ENCODE measurements at regions of chr18 and their contacts with region 1.

Region 1: DNA sequence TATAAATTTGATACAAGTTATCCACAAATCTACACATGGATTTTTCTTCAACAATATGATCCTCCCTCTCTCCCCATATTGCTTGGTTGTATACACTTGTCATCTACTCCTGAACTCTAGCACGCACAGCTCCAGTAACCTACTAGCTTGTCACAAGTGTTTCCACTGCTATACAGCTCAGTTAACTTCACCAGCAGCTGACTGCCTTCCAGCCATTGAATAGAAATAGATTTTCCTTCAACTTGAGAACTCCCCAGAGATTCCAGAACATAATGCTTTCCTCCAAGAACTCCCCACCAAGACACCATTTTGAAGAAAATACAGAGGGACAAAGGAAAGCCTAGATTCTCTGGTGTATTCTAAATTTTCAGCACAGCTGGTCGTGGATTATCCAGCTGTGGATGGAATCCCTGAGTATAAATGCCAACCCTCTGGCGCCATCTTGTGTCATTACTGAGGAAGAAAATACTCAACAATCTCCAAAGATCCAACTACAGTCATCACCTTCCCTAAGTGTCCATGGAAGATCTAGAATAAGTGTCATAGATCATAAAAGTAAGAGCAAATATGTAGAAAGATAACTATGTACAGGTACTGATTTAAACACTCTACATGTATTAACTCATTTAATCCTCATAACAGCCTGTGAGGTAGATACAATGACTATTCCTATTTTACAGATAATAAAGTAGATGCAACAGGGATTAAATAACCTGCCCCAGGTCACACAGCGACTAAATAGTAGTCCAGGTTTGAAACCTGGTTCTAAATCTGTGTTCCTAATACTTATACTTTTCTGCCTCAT is 156.7 kb downstream of the ARHGAP28 start:
- DNase-seq: no peak
- H3K4me3 ChIP-seq: no peak overlapping the region
- H3K27ac ChIP-seq: peak overlapping the region in 3 of 4 donors; percentile 40 to 59 (median 52)
- H3K4me1 ChIP-seq: peaks cover 0 to 19% (median 12%) of the 10 kb centered on the region in 4 donors
- H3K27me3 ChIP-seq: no peaks in the 10 kb centered on the region
- CTCF ChIP-seq: peak; percentile 48 to 79 (median 60)
- EP300 ChIP-seq: no peak
- POLR2A ChIP-seq: no peak

Region 2: GRCh38 chr18:5879479-5879882 is 1006.7 kb before region 1 on chr18:
- intact Hi-C with region 1: loop called (anchors 5 kb)
- DNase-seq: no peak
- H3K4me3 ChIP-seq: no peak overlapping the region
- H3K27ac ChIP-seq: no peak overlapping the region
- H3K4me1 ChIP-seq: no peaks in the 10 kb centered on the region
- H3K27me3 ChIP-seq: peaks cover 0 to 13% (median 0%) of the 10 kb centered on the region in 3 donors
- CTCF ChIP-seq: peak in 3 of 4 experiments; percentile 54 to 67 (median 55)
- EP300 ChIP-seq: no peak
- POLR2A ChIP-seq: no peak

Region 3: GRCh38 chr18:6543330-6543908 is 342.8 kb before region 1 on chr18:
- intact Hi-C with region 1: loop called (anchors 1 kb)
- DNase-seq: no peak
- H3K4me3 ChIP-seq: no peak overlapping the region
- H3K27ac ChIP-seq: no peak overlapping the region
- H3K4me1 ChIP-seq: peaks cover 0 to 4% (median 0%) of the 10 kb centered on the region in 4 donors
- H3K27me3 ChIP-seq: no peaks in the 10 kb centered on the region
- CTCF ChIP-seq: peak in 3 of 4 experiments; percentile 45 to 47 (median 46)
- EP300 ChIP-seq: no peak
- POLR2A ChIP-seq: no peak

Region 4: DNA sequence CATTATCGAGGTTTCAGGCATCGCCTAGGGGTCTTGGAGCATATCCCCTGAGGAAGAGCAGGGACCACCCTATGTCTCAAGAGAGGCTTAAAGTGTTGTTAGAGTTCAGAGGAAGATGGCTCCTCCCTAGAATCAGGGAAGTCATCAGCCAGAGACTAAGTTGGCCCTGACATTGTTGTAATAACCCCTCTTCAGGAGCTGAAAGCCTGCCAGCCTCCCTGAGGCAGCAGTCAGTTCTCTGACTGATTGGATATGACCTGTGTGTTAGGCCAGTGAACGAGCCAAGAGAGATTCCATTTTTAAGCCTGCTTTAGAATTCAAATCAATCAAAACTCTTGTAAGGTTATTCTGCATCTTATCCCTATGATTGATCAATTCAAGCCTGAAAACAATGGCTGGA is 121.8 kb before region 1 on chr18:
- intact Hi-C with region 1: no loop called
- DNase-seq: no peak
- H3K4me3 ChIP-seq: no peak overlapping the region
- H3K27ac ChIP-seq: peak overlapping the region in 2 of 4 donors; percentile 64 to 68
- H3K4me1 ChIP-seq: no peaks in the 10 kb centered on the region
- H3K27me3 ChIP-seq: no peaks in the 10 kb centered on the region
- CTCF ChIP-seq: no peak
- EP300 ChIP-seq: no peak
- POLR2A ChIP-seq: no peak